Adrenal gland (tissue), 19 donors: ENCODE measurements at regions of chr17 and their contacts with region 1.

Region 1: DNA sequence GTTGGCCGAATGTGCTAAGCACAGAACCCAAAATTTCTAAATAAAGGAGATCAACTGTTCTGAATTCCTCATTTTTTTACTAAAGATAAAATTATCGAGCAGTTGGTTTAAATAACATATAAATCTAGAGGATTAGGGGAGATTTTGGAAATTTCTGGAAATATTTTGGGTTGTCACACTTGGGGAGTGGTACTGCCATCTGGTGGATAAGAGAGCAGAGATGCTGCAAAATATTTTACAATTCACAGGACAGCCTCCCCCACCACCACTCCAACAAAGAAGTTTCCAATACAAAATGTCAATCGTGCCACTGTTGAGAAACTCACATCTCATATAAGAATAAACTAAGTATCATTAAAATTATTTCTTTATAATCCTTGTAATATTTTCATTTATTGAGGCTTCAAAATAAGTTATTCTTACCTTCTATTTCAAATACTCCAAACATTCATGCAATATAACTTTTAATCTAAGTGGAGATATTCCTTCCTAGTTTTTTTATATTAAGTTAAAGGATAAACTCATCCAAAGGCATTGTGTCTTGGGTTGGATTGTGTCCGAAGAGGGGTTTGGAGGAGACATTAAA is 17.0 kb upstream of the ABCA8 start:
- DNase-seq: peak in 4 of 7 donors; percentile 20 to 46 (median 34)
- H3K4me3 ChIP-seq: no peak overlapping the region
- H3K27ac ChIP-seq: no peak overlapping the region
- H3K4me1 ChIP-seq: peaks cover 0 to 11% of the 10 kb centered on the region in 2 donors
- H3K27me3 ChIP-seq: no peaks in the 10 kb centered on the region
- CTCF ChIP-seq: peak; percentile 54 to 77 (median 70)
- POLR2A ChIP-seq: no peak

Region 2: DNA sequence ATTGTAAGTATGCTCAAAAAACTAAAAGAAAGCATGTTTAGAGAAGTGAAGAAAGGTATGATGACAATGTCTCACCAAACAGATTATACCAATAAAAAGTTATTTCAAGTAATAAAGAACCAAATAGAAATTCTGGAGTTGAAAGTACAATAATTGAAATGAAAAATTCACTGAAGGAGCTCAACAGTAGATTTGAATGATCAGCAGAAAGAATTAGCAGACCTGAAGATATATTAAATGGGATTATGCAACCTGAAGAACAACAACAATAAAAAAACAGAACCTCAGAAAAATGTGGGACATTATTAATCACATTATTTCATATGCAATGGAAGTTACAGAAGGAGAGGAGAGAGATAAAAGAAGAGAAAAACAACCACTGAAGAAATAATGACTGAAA is 74.7 kb before region 1 on chr17:
- intact Hi-C with region 1: no loop called
- DNase-seq: no peak
- H3K4me3 ChIP-seq: no peak overlapping the region
- H3K27ac ChIP-seq: no peak overlapping the region
- H3K4me1 ChIP-seq: no peaks in the 10 kb centered on the region
- H3K27me3 ChIP-seq: no peaks in the 10 kb centered on the region
- CTCF ChIP-seq: no peak
- POLR2A ChIP-seq: no peak

Region 3: DNA sequence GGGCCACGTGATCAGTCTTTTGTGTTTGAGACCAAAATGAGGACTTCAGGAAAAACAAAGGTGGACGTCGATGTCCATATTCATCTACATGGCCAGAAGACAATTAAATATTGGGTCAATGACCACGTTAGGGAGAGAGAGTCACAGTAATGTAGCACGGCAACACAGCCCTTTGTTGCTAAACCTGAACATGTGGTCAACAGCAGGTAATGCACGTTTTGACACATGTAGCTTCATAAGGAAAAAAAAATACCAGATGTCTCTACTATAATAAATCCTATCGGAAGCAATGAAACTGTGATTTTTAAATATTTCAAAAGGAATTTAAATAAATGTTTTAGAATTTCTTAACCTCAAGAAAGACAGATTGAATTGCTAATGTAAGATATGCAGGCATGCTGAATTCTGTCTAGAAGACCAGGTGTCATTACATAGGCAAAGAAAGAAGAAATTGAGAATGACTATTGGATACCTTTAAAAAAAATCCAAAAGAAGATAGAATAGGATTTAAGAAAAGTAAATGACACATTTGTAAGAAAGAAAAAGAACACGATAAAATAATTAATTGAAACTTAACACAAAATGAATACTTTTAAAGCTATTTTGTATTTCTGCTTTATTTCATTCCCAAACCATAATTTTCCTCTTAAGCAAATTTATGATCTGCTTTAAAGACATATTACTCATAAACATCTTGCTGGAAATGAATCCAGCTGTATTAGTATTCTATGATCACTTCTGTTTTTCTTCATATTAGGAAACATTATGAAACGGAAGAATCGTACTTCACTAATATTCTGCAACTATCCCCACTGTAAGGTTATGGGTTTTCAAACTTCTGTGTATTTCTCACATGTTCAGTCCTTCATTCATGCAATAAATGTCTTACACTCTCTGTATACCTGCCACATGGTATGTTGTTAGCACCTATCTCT is 47.2 kb before region 1 on chr17:
- intact Hi-C with region 1: no loop called
- DNase-seq: no peak
- H3K4me3 ChIP-seq: no peak overlapping the region
- H3K27ac ChIP-seq: no peak overlapping the region
- H3K4me1 ChIP-seq: peaks cover 14 to 22% of the 10 kb centered on the region in 2 donors
- H3K27me3 ChIP-seq: no peaks in the 10 kb centered on the region
- CTCF ChIP-seq: no peak
- POLR2A ChIP-seq: no peak

Region 4: DNA sequence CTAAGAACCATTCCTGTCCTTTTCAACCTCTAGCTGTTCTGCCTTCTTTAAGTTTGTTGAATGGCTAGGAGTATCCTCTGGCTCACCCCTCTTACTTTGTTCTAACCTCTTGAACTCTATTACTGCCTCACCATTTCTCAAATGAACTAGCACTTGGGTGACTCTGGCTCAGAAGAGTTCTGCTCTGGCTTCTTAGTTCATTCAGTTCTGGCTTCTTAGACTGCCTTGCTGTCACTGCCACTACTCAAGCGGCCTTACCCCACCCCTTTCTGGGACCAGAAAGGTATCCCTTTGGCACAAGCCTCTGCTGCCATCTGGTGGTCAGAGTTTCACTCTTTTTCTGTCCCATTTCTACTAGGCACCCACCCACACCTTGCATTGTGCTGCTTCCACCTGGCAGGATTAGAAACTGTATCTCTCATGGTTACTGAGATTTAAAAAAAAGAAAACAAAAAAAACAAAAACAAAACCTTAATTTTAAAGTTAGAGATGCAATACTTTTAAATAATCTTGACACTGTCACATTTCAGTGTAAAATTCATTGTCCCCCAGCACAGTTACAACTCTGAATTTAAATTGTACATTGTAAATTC is 263.2 kb after region 1 on chr17:
- intact Hi-C with region 1: loop called in 1 of 2 experiments (anchors 10 kb)
- DNase-seq: peak; percentile 82 to 93 (median 87)
- H3K4me3 ChIP-seq: no peak overlapping the region
- H3K27ac ChIP-seq: no peak overlapping the region
- H3K4me1 ChIP-seq: peaks cover 0 to 4% of the 10 kb centered on the region in 2 donors
- H3K27me3 ChIP-seq: no peaks in the 10 kb centered on the region
- CTCF ChIP-seq: peak; percentile 73 to 97 (median 86)
- POLR2A ChIP-seq: no peak